B cell (primary cell): ENCODE measurements at regions of chr14 and their contacts with region 1.

Region 1: GRCh38 chr14:105375635-105376057 is 22.7 kb upstream of the TEX22 start:
- DNase-seq: no peak
- ATAC-seq: no peak
- H3K4me3 ChIP-seq: no peak overlapping the region
- H3K4me3 Mint-ChIP-seq: no peak overlapping the region
- H3K27ac ChIP-seq: no peak overlapping the region
- H3K27ac Mint-ChIP-seq: no peak overlapping the region
- H3K4me1 ChIP-seq: peaks cover 0 to 11% of the 10 kb centered on the region in 2 donors
- H3K4me1 Mint-ChIP-seq: peaks cover 10% of the 10 kb centered on the region
- H3K27me3 ChIP-seq: no peaks in the 10 kb centered on the region
- H3K27me3 Mint-ChIP-seq: no peaks in the 10 kb centered on the region
- CTCF ChIP-seq: no peak

Region 2: GRCh38 chr14:105300792-105301533 is 74.7 kb before region 1 on chr14 and contains the start of gene BRF1:
- CTCF ChIA-PET with region 1: no interaction called
- POLR2A ChIA-PET with region 1: no interaction called
- intact Hi-C with region 1: no loop called
- DNase-seq: peak; percentile 99
- ATAC-seq: peak; percentile 85
- H3K4me3 ChIP-seq: peak within 1 kb of the TSS; percentile 55 to 78 (median 67)
- H3K4me3 Mint-ChIP-seq: peak within 1 kb of the TSS; percentile 92
- H3K27ac ChIP-seq: peak within 1 kb of the TSS; percentile 82 to 85
- H3K27ac Mint-ChIP-seq: peak within 1 kb of the TSS; percentile 96
- H3K4me1 ChIP-seq: peaks cover 15 to 22% of the 10 kb centered on the region in 2 donors
- H3K4me1 Mint-ChIP-seq: peaks cover 20% of the 10 kb centered on the region
- H3K27me3 ChIP-seq: no peaks in the 10 kb centered on the region
- H3K27me3 Mint-ChIP-seq: no peaks in the 10 kb centered on the region
- CTCF ChIP-seq: no peak
- total RNA-seq, gene BRF1: 55.8 and 61.5 TPM in 2 replicates

Region 3: GRCh38 chr14:105340821-105341733 is 34.6 kb before region 1 on chr14:
- CTCF ChIA-PET with region 1: no interaction called
- POLR2A ChIA-PET with region 1: no interaction called
- intact Hi-C with region 1: no loop called
- DNase-seq: no peak
- ATAC-seq: no peak
- H3K4me3 ChIP-seq: no peak overlapping the region
- H3K4me3 Mint-ChIP-seq: no peak overlapping the region
- H3K27ac ChIP-seq: no peak overlapping the region
- H3K27ac Mint-ChIP-seq: no peak overlapping the region
- H3K4me1 ChIP-seq: peaks cover 0 to 9% of the 10 kb centered on the region in 2 donors
- H3K4me1 Mint-ChIP-seq: peaks cover 14% of the 10 kb centered on the region
- H3K27me3 ChIP-seq: no peaks in the 10 kb centered on the region
- H3K27me3 Mint-ChIP-seq: no peaks in the 10 kb centered on the region
- CTCF ChIP-seq: no peak

Region 4: DNA sequence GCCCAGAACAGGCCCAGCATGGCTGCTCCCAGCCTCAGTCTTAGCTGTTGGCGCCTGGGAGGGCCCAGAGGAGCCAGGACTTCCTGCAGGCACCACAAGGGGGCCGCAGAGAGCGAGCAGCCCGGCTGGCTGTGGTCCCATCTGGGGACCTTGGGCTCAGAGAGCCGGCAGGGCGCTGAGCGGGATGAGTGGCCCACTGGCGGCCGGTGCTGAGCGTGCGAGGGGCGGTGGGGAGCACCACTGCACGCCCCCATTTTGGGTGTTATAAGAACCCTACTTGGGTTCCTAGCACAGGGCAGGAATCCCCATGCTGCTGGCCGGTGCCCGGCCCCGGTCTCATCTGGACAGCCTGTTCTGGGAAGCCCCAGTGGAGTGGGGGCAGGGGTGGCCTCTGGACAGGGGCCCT is 73.1 kb after region 1 on chr14:
- CTCF ChIA-PET with region 1: interaction called, 5 read pairs
- POLR2A ChIA-PET with region 1: no interaction called
- intact Hi-C with region 1: loop called (anchors 1 kb)
- DNase-seq: peak; percentile 77
- ATAC-seq: peak; percentile 95
- H3K4me3 ChIP-seq: no peak overlapping the region
- H3K4me3 Mint-ChIP-seq: no peak overlapping the region
- H3K27ac ChIP-seq: no peak overlapping the region
- H3K27ac Mint-ChIP-seq: no peak overlapping the region
- H3K4me1 ChIP-seq: no peaks in the 10 kb centered on the region
- H3K4me1 Mint-ChIP-seq: no peaks in the 10 kb centered on the region
- H3K27me3 ChIP-seq: no peaks in the 10 kb centered on the region
- H3K27me3 Mint-ChIP-seq: no peaks in the 10 kb centered on the region
- CTCF ChIP-seq: peak; percentile 86